ENCODE measurements at regions of chrX and their contacts with region 1.

Region 1: DNA sequence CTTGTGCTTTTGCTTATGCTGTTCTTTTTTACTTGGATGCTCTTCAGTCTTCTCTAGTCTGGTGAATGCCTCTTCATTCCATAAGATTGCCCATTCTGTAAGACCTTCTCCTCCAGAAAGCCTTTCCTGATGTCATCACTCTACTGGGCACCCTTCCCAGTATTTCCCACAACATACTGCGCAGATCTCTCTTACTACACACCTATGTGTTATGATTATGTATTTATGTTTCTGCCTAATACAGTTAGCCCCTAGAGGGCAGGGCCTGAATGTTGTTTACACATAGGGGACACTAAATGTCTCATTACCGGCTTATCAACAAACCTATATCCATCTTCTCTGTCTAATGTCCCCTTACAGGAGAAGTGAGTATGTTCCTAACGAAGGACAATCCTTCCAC is 21.1 kb downstream of the AIFM1 start:
- DNase-seq: no peak
- ATAC-seq: peak; percentile 66; the same call in 2 of the 3 replicates
- H3K4me3 ChIP-seq: no peak overlapping the region
- H3K27ac ChIP-seq: no peak overlapping the region
- H3K4me1 ChIP-seq: peaks cover 0 to 7% of the 10 kb centered on the region in 2 experiments; a peak in 3 of 5 replicates
- H3K27me3 ChIP-seq: no peaks in the 10 kb centered on the region
- CTCF ChIP-seq: peak in 2 of 3 experiments; percentile 10 to 40; a peak in 2 of 6 replicates
- EP300 ChIP-seq: no peak
- POLR2A ChIP-seq: no peak
- RAD21 ChIP-seq: peak in 1 of 2 experiments; percentile 52; a peak in 3 of 4 replicates

Region 2: DNA sequence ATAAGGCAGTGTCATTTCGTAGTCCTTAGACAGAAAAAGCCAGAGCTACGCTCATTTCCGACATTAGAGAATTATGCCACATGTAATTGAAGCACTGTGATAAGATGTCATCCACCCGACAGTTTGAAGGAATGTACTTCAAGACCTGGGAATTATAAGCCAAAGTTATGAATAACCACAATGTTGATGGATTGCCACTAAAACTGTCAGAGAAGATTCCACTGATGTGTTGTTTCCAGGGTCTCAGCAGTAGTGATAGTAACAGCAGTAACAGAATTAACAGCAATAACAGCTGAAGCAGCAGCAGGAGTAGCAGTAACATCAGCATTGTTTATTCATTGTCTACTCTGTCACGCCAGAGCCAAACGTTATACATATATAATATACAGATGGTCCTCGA is 52.0 kb after region 1 on chrX:
- CTCF ChIA-PET with region 1: interaction called, 6 read pairs
- POLR2A ChIA-PET with region 1: no interaction called
- in situ Hi-C with region 1: no loop called
- intact Hi-C with region 1: loop called (anchors 1 kb)
- DNase-seq: no peak
- ATAC-seq: no peak
- H3K4me3 ChIP-seq: no peak overlapping the region
- H3K27ac ChIP-seq: no peak overlapping the region
- H3K4me1 ChIP-seq: peaks cover 0 to 8% of the 10 kb centered on the region in 2 experiments; a peak in 2 of 5 replicates
- H3K27me3 ChIP-seq: no peaks in the 10 kb centered on the region
- CTCF ChIP-seq: no peak
- EP300 ChIP-seq: no peak
- POLR2A ChIP-seq: no peak
- RAD21 ChIP-seq: no peak